ENCODE measurements at regions of chr6 and their contacts with region 1.

Region 1: GRCh38 chr6:102820098-102820497 is 1426.6 kb downstream of the GRIK2 start:
- DNase-seq: no peak
- H3K4me3 ChIP-seq: no peak overlapping the region
- H3K27ac ChIP-seq: no peak overlapping the region
- H3K27me3 ChIP-seq: peaks cover 0 to 7% (median 0%) of the 10 kb centered on the region in 45 donors
- CTCF ChIP-seq: no peak

Region 2: GRCh38 chr6:102313699-102314098 is 506.4 kb before region 1 on chr6:
- intact Hi-C with region 1: loop called in 1 of 2 experiments (anchors 10 kb)
- DNase-seq: no peak
- H3K4me3 ChIP-seq: no peak overlapping the region
- H3K27ac ChIP-seq: no peak overlapping the region
- H3K27me3 ChIP-seq: no peaks in the 10 kb centered on the region
- CTCF ChIP-seq: no peak

Measured in dorsolateral prefrontal cortex (tissue), 120 donors.